KBM-7 (cell line): ENCODE measurements at regions of chrX and their contacts with region 1.

Region 1: DNA sequence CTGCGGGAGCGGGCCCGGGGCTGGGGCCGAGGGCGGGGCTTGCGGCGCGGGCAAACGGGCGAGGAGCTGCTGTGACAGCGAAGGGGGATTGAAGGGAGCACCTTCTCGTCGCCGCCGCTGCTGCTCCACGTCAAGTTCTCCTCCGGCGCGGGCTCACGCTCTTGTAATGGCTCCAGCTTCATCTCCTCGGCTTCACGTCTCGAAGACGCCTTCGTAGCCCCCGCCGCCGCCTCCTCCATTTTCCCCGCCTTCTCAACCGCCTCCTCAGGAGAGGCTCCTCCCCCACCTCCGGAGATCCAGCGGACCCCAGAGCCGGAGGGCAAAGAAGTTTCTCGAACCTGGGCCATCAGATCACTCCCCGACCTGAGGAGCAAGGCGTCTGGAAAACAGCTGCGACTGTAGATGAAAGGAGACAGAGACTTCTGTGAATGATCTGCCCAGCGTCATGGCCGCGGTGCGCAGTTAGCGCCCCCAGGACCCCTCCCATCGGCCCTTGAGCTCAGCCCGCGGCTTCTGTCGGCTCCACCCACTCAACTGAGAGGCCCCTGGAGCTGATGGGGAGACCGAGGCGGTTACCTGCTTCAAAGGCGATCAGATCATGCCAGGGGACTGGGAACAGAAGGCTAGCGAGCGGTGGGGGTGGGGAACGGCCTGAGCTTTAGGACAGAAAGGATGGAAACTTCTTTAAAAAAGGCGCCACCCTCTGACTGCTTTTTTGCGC is 895 bp downstream of the USP51 start:
- DNase-seq: peak; percentile 78

Region 2: GRCh38 chrX:54721424-54721823 is 767.3 kb before region 1 on chrX:
- in situ Hi-C with region 1: no loop called
- DNase-seq: no peak

Region 3: DNA sequence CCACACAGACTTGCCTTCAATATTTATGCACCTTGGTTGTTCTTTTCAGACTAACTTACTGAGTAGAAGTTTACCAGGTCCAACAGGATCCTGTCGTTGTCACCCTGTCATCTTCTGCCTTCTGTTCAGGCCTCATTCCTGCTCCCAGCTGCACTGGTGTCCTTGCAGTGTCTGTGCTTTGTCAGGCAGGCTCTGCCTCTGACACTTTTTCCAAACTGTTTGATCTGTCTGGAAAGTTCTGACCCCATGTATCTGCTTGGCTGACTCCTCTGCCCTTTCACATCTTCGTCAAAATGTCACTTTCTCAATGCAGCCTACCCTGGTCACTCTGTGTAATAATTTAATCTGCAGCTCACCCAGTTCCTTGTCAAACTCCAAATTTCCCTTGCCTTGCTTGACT is 390.1 kb before region 1 on chrX:
- in situ Hi-C with region 1: no loop called
- DNase-seq: no peak

Region 4: DNA sequence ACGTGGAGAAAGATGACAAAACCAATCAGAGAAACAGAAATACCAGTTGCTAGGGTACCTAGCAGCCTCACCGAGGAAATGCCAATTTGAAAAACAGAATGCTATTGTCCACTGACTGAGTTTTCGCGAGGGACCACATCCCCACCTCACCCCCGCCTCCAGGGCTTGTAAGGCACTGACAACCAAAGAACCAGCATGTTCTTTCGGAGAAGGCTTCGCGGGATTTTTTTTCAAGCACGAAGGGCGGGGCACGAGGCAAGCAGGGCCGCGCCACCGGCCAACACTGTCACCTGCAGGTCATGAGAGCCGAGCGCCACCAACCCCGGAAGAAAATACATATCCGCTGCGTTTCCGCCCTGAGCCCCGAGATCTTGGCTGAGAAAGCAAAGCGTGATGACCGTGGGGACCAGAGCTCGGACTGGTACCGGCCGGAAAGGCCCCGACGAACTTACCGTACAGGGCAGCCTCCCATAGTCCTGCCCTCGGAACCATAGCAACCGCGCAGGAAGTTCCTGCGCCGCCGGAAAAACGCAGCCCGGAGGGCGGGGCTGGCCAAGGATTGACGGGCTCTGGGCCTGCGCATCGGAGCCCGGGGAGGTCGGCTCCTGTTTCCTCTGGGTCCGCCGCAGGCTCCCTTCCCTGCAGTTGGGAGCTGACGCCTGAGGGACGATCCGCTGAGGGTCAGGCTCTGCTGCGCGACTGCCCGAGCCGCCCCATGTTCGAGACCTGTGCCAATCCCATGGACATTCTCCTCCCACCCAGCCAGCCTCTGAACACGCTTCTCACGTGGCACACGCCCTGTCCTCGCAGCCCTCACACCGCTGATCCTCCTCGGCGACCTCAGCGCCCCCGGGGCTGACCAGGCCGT is 327.8 kb before region 1 on chrX:
- in situ Hi-C with region 1: loop called (anchors 25 kb)
- DNase-seq: peak; percentile 97

Region 5: GRCh38 chrX:55210931-55211681 is 277.6 kb before region 1 on chrX:
- in situ Hi-C with region 1: no loop called
- DNase-seq: no peak

Region 6: GRCh38 chrX:55379396-55379795 is 109.4 kb before region 1 on chrX:
- in situ Hi-C with region 1: loop called (anchors 25 kb)
- DNase-seq: no peak